HAP-1 (cell line): ENCODE measurements at regions of chr22 and their contacts with region 1.

Region 1: GRCh38 chr22:39532215-39533071 is at the start of gene RPS19BP1:
- DNase-seq: peak; percentile 99 to 100
- H3K4me3 ChIP-seq: peak within 1 kb of the TSS; percentile 95
- H3K4me1 ChIP-seq: peaks cover 28% of the 10 kb centered on the region
- H3K27me3 ChIP-seq: no peaks in the 10 kb centered on the region

Region 2: GRCh38 chr22:39710380-39711150 is 178.1 kb after region 1 on chr22:
- in situ Hi-C with region 1: no loop called
- DNase-seq: no peak
- H3K4me3 ChIP-seq: no peak overlapping the region
- H3K4me1 ChIP-seq: peaks cover 12% of the 10 kb centered on the region
- H3K27me3 ChIP-seq: no peaks in the 10 kb centered on the region

Region 3: GRCh38 chr22:40024201-40025061 is 492.0 kb after region 1 on chr22:
- in situ Hi-C with region 1: loop called (anchors 5 kb)
- DNase-seq: peak; percentile 73 to 86
- H3K4me3 ChIP-seq: no peak overlapping the region
- H3K4me1 ChIP-seq: no peaks in the 10 kb centered on the region
- H3K27me3 ChIP-seq: no peaks in the 10 kb centered on the region

Region 4: DNA sequence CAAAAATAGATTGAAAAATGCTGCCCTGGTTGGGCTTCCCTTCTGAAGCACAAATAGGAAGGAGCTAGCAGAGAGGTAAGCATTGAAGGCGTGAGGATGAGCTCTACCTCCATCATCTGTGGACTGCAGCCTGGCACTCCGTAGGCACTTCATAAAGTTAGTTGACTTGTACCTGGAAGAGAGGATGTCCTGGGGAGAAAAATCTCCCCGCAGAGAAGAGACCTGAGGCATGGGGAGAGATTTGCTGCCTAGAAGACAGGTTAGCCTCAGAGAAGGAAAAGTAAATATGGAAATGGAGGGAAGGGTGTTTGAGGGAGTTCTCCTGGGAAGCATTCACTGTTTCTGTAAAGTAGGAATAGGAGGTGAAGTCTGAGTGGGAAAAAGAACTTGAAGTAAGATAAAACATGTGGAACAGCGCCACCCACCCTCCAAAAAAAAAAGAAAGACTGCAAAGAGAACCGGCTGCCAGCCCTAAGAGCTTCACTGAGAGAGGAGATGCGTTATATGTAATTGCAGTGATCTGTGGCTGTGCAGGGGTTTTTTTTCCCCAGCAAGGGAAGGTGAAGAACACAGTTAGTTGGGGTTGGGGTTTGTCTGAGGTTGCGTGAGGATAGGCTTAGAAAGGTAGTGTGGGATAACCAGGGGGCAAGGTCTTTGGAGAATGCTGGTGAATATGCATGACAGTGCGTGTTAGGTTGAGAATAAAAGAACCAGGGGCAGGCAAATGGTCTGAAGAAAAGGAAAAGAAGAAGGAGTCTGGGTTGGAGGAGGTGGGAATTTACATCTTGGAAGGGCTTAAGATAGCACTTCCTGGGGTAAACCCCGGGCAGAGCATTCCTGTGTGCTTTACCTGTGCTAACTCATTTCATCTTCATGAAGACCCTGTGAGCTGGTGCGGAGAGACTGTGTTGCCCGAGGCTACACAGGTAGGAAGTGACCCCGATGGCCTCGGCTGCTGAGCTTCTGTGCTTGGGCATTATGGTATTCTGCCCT is 661.3 kb after region 1 on chr22:
- in situ Hi-C with region 1: loop called (anchors 10 kb)
- DNase-seq: peak; percentile 38 to 48
- H3K4me3 ChIP-seq: no peak overlapping the region
- H3K4me1 ChIP-seq: peaks cover 25% of the 10 kb centered on the region
- H3K27me3 ChIP-seq: no peaks in the 10 kb centered on the region

Region 5: GRCh38 chr22:40210818-40211217 is 678.4 kb after region 1 on chr22:
- in situ Hi-C with region 1: no loop called
- DNase-seq: no peak
- H3K4me3 ChIP-seq: no peak overlapping the region
- H3K4me1 ChIP-seq: peaks cover 3% of the 10 kb centered on the region; the same call in 1 of the 2 replicates
- H3K27me3 ChIP-seq: no peaks in the 10 kb centered on the region

Region 6: DNA sequence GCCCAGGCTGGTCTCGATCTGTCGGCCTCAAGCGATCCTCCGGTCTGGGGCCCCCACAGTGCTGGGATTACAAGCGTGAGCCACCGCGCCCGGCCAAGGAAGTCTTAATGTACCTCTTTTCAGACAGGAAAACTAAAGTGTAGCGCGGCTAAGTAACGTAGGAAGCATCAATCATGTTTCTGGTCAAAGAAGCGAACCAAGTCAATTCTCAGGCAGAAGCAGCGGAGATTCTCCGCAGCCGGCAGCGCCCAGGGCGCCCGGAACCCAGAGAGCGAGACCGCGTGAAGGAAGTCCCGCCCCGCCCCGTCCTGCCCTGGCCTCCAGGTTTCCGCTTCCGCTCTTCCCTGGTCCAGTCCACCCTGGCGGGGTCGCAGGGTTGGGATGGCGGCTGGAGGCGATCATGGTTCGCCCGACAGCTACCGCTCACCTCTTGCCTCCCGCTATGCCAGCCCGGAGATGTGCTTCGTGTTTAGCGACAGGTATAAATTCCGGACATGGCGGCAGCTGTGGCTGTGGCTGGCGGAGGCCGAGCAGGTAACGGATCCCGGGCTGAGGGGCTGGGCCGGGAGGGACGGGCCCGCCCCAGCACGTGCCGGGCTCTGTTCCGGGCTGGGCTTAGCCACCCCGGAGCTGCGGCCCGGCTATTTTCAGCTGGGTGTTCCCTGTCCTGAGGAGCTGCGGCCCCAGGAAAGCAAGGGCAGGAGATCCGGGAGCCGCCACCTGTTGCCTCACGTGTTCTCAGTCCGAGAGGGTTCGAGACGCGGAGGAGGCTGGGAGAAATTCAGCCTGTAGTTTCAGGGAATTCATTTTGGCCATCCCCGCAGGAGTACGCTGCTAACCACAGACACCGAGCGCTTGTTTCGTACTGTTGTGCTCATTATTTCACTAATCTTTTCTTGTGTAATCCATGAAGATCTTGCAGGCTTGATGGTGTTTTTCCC is 814.0 kb after region 1 on chr22 and contains the start of gene ADSL:
- in situ Hi-C with region 1: loop called (anchors 10 kb)
- DNase-seq: peak; percentile 87 to 94
- H3K4me3 ChIP-seq: peak within 1 kb of the TSS; percentile 93
- H3K4me1 ChIP-seq: peaks cover 4% of the 10 kb centered on the region; the same call in 1 of the 2 replicates
- H3K27me3 ChIP-seq: no peaks in the 10 kb centered on the region